Esophagus squamous epithelium (tissue), 5 donors: ENCODE measurements at regions of chr2 and their contacts with region 1.

Region 1: GRCh38 chr2:38274286-38275276 is 102.5 kb downstream of the ATL2 start:
- DNase-seq: no peak
- H3K4me3 ChIP-seq: no peak overlapping the region
- H3K27ac ChIP-seq: no peak overlapping the region
- H3K4me1 ChIP-seq: peaks cover 0 to 6% (median 0%) of the 10 kb centered on the region in 3 donors
- H3K27me3 ChIP-seq: peaks cover 0 to 10% (median 0%) of the 10 kb centered on the region in 4 donors
- CTCF ChIP-seq: peak in 5 of 6 experiments; percentile 54 to 82 (median 73)
- POLR2A ChIP-seq: no peak

Region 2: GRCh38 chr2:37982147-37982582 is 292.4 kb before region 1 on chr2:
- intact Hi-C with region 1: loop called (anchors 5 kb)
- DNase-seq: no peak
- H3K4me3 ChIP-seq: peak overlapping the region in 1 of 4 donors; percentile 49
- H3K27ac ChIP-seq: no peak overlapping the region
- H3K4me1 ChIP-seq: peaks cover 0 to 4% (median 0%) of the 10 kb centered on the region in 3 donors
- H3K27me3 ChIP-seq: no peaks in the 10 kb centered on the region
- CTCF ChIP-seq: peak; percentile 75 to 86 (median 78)
- POLR2A ChIP-seq: no peak